MCF 10A (cell line): ENCODE measurements at regions of chr3 and their contacts with region 1.

Region 1: DNA sequence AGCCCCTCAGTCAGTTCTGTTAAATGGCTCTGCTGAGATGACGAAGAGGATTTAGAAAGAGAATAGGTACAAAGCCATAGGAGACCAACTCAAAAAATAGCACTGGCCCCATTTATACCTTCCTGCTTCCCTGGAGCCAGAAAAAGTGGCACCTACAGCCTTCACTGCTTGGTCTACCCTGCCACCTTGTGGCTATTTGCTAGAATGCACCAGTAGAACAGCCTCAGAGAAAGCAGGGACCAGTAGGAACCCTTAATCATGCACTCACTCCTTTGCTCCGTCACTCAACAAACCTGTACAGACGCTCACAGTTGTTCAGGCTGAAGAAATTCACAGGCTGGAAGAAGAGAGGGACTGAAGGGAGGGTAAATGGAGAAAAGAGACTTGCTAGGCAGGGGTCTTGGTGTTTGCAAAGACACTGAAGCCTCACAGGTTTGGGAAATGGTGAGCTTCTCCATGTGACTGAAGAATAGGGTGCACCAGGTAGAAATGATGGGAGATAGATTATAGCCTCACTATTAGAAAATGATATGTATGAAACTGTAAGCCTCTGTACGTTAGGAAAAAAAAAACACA is 12.1 kb upstream of the RTP2 start:
- DNase-seq: peak; percentile 84
- H3K4me3 Mint-ChIP-seq: no peak overlapping the region
- H3K27ac Mint-ChIP-seq: no peak overlapping the region
- H3K4me1 Mint-ChIP-seq: peaks cover 6% of the 10 kb centered on the region
- H3K27me3 Mint-ChIP-seq: no peaks in the 10 kb centered on the region
- CTCF ChIP-seq: peak; percentile 89

Region 2: GRCh38 chr3:187227658-187228258 is 486.7 kb before region 1 on chr3:
- CTCF ChIA-PET with region 1: interaction called, 33 read pairs
- POLR2A ChIA-PET with region 1: no interaction called
- intact Hi-C with region 1: no loop called
- DNase-seq: peak; percentile 45
- H3K4me3 Mint-ChIP-seq: no peak overlapping the region
- H3K27ac Mint-ChIP-seq: no peak overlapping the region
- H3K4me1 Mint-ChIP-seq: peaks cover 27% of the 10 kb centered on the region
- H3K27me3 Mint-ChIP-seq: no peaks in the 10 kb centered on the region
- CTCF ChIP-seq: no peak

Region 3: GRCh38 chr3:187684880-187685279 is 29.6 kb before region 1 on chr3:
- CTCF ChIA-PET with region 1: interaction called, 42 read pairs
- POLR2A ChIA-PET with region 1: no interaction called
- intact Hi-C with region 1: loop called (anchors 1 kb)
- DNase-seq: no peak
- H3K4me3 Mint-ChIP-seq: no peak overlapping the region
- H3K27ac Mint-ChIP-seq: no peak overlapping the region
- H3K4me1 Mint-ChIP-seq: no peaks in the 10 kb centered on the region
- H3K27me3 Mint-ChIP-seq: peaks cover 48% of the 10 kb centered on the region
- CTCF ChIP-seq: no peak

Region 4: GRCh38 chr3:187725653-187726370 is 11.3 kb after region 1 on chr3:
- CTCF ChIA-PET with region 1: interaction called, 15 read pairs
- POLR2A ChIA-PET with region 1: interaction called, 5 read pairs
- intact Hi-C with region 1: no loop called
- DNase-seq: no peak
- H3K4me3 Mint-ChIP-seq: no peak overlapping the region
- H3K27ac Mint-ChIP-seq: no peak overlapping the region
- H3K4me1 Mint-ChIP-seq: no peaks in the 10 kb centered on the region
- H3K27me3 Mint-ChIP-seq: no peaks in the 10 kb centered on the region
- CTCF ChIP-seq: no peak

Region 5: GRCh38 chr3:187889601-187890404 is 175.3 kb after region 1 on chr3:
- CTCF ChIA-PET with region 1: no interaction called
- POLR2A ChIA-PET with region 1: no interaction called
- intact Hi-C with region 1: no loop called
- DNase-seq: no peak
- H3K4me3 Mint-ChIP-seq: no peak overlapping the region
- H3K27ac Mint-ChIP-seq: no peak overlapping the region
- H3K4me1 Mint-ChIP-seq: peaks cover 7% of the 10 kb centered on the region
- H3K27me3 Mint-ChIP-seq: no peaks in the 10 kb centered on the region
- CTCF ChIP-seq: no peak